ENCODE measurements at regions of chr2 and their contacts with region 1.

Region 1: GRCh38 chr2:112706170-112706664 is 14.6 kb upstream of the NT5DC4 start:
- DNase-seq: peak; percentile 92 to 97 (median 94)
- ATAC-seq: peak; percentile 96
- H3K4me3 ChIP-seq: no peak overlapping the region
- H3K27ac ChIP-seq: peak overlapping the region; percentile 73
- H3K4me1 ChIP-seq: peaks cover 32 to 56% of the 10 kb centered on the region in 2 experiments
- H3K27me3 ChIP-seq: no peaks in the 10 kb centered on the region
- CTCF ChIP-seq: peak in 1 of 3 experiments; percentile 3; a peak in 1 of 6 replicates
- EP300 ChIP-seq: peak; percentile 98
- POLR2A ChIP-seq: peak; percentile 68
- RAD21 ChIP-seq: peak; percentile 34

Region 2: DNA sequence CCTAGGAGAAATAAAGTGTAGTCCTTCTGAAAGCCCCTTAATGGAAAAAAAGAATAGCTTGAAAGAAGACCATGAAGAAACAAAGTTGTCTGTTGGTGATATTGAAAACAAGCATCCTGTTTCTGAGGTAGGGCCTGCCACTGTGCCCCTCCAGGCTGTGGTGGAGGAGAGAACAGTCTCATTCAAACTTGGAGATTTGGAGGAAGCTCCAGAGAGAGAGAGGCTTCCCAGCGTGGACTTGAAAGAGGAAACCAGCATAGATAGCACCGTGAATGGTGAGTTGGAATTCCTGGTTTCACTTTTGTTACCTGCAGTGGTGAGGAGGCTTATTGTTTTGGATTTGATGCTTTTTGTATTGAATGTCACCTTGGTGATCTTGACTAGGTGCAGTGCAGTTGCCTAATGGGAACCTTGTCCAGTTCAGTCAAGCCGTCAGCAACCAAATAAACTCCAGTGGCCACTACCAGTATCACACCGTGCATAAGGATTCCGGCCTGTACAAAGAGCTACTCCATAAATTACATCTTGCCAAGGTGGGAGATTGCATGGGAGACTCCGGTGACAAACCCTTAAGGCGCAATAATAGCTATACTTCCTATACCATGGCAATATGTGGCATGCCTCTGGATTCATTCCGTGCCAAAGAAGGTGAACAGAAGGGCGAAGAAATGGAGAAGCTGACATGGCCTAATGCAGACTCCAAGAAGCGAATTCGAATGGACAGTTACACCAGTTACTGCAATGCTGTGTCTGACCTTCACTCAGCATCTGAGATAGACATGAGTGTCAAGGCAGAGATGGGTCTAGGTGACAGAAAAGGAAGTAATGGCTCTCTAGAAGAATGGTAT is 47.2 kb before region 1 on chr2:
- CTCF ChIA-PET with region 1: no interaction called
- POLR2A ChIA-PET with region 1: interaction called, 11 read pairs
- in situ Hi-C with region 1: no loop called
- intact Hi-C with region 1: no loop called
- DNase-seq: no peak
- ATAC-seq: peak; percentile 53
- H3K4me3 ChIP-seq: no peak overlapping the region
- H3K27ac ChIP-seq: peak overlapping the region; percentile 44; the same call in 2 of the 3 replicates
- H3K4me1 ChIP-seq: peaks cover 0 to 32% of the 10 kb centered on the region in 2 experiments; a peak in 4 of 5 replicates
- H3K27me3 ChIP-seq: no peaks in the 10 kb centered on the region
- CTCF ChIP-seq: peak in 1 of 3 experiments; percentile 11; a peak in 1 of 6 replicates
- EP300 ChIP-seq: no peak
- POLR2A ChIP-seq: peak; percentile 35; the same call in 1 of the 2 replicates
- RAD21 ChIP-seq: no peak

Region 3: DNA sequence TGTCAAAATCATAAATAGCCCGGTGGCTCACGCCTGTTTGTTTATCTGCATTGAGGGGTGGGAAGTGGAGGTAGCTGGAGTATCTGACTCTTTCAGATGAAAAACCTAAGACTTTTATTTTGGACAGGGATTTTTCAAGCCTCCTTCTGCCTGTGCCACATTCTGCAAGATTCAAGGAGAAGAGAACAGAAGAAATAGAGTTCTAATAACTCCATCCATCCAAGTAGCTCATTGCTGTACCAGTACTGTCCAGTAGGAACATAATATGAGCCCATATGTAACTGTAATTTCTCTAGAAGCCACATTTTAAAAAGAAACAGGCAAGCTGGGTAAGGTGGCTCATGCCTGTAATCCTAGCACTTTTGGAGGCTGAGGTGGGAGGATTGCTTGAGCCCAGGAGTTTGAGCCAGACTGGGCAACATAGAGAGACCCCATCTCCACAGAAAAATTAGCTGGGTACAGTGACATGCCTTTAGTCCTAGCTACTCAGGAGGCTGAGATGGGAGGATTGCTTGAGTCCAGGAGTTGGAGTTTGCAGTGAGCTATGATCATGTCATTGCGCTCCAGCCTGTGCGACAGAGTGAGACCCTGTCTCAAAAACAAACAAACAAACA is 20.8 kb before region 1 on chr2:
- CTCF ChIA-PET with region 1: no interaction called
- POLR2A ChIA-PET with region 1: interaction called, 12 read pairs
- in situ Hi-C with region 1: no loop called
- intact Hi-C with region 1: no loop called
- DNase-seq: peak in 2 of 4 experiments; percentile 37 to 53
- ATAC-seq: peak; percentile 56
- H3K4me3 ChIP-seq: no peak overlapping the region
- H3K27ac ChIP-seq: peak overlapping the region; percentile 86
- H3K4me1 ChIP-seq: peaks cover 44 to 66% of the 10 kb centered on the region in 2 experiments
- H3K27me3 ChIP-seq: no peaks in the 10 kb centered on the region
- CTCF ChIP-seq: peak in 1 of 3 experiments; percentile 43; a peak in 3 of 6 replicates
- EP300 ChIP-seq: no peak; the same call in 1 of the 2 replicates
- POLR2A ChIP-seq: no peak
- RAD21 ChIP-seq: no peak

Region 4: DNA sequence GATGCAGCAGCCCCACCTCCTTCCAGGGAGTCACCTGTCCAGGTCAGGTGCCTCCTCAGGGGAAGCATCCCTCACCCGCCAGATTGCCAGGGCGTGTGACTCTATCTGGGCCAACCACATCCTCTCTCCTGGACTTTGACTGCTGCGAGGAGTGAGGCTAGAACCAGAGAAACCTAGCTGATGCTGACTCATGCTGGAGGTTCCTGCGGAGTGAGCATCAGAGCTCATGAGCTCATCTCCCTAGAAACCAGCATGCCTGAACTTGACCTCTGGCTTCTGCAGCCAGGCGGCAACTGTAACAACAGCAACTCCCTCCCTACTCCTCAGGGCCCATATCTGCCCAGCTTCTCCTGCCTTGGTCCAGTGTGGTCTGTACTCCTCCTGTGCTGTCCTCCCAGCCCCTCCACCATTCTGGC is 13.7 kb before region 1 on chr2:
- CTCF ChIA-PET with region 1: no interaction called
- POLR2A ChIA-PET with region 1: interaction called, 19 read pairs
- in situ Hi-C with region 1: no loop called
- intact Hi-C with region 1: no loop called
- DNase-seq: peak; percentile 84 to 97 (median 87)
- ATAC-seq: peak; percentile 95
- H3K4me3 ChIP-seq: no peak overlapping the region
- H3K27ac ChIP-seq: peak overlapping the region; percentile 70
- H3K4me1 ChIP-seq: peaks cover 38 to 40% of the 10 kb centered on the region in 2 experiments
- H3K27me3 ChIP-seq: no peaks in the 10 kb centered on the region
- CTCF ChIP-seq: 0 out of 6 replicates have a peak, but pooled peaks of 1 of the 3 experiments have one; percentile 4
- EP300 ChIP-seq: peak; percentile 68
- POLR2A ChIP-seq: no peak
- RAD21 ChIP-seq: peak in 1 of 2 experiments; percentile 38; a peak in 2 of 4 replicates